ENCODE measurements at regions of chr11 and their contacts with region 1.

Region 1: DNA sequence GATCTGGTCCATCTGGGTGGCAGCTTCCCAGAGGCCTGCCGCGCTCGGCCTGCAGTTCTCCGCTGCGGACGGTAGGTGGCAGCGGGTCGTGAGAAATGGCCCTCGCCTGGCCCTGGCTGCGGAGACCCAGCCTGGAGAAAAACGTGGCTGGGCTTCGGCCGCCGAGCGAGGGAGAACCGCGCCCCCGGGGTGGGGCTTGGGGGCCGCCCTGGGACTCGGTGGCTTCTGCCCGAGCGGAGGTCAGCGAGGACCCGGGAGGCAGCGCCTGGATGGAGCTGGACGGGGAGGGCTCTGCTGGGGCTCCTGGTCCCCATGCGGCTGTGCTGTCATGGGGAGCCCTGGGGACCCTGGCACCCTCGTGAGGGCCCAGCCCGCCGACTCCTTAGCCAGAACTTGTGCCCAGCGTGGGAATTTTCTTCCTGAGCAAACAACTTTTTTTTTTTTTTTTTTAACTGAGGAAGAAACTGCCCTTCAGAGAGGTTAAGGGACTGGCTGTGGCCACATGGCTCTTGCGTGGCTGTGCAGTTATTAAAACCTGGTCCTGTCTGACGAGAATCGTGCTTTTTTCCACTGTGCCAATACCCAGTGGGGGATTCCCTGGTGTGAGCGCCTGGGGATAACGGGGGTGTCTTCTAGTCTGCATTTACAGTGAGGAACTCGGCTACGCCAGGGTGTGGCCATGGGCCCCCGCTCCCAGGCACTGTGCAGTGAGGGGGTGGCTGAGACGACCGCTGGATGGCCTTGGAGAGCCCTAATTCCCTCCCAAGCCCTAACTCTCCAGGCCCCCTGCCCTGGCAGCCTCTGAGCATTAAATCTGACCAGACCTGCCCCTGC is 535.6 kb downstream of the INSC start:
- DNase-seq: peak; percentile 84
- ATAC-seq: peak; percentile 100
- H3K4me3 ChIP-seq: peak overlapping the region in 1 of 3 experiments; percentile 39; a peak in 1 of 6 replicates
- H3K27ac ChIP-seq: no peak overlapping the region
- H3K4me1 ChIP-seq: peaks cover 7% of the 10 kb centered on the region
- H3K27me3 ChIP-seq: peaks cover 0 to 7% of the 10 kb centered on the region in 2 experiments; a peak in 3 of 5 replicates
- CTCF ChIP-seq: peak; percentile 99
- EP300 ChIP-seq: peak; percentile 62 to 85
- POLR2A ChIP-seq: no peak
- RAD21 ChIP-seq: peak; percentile 94

Region 2: DNA sequence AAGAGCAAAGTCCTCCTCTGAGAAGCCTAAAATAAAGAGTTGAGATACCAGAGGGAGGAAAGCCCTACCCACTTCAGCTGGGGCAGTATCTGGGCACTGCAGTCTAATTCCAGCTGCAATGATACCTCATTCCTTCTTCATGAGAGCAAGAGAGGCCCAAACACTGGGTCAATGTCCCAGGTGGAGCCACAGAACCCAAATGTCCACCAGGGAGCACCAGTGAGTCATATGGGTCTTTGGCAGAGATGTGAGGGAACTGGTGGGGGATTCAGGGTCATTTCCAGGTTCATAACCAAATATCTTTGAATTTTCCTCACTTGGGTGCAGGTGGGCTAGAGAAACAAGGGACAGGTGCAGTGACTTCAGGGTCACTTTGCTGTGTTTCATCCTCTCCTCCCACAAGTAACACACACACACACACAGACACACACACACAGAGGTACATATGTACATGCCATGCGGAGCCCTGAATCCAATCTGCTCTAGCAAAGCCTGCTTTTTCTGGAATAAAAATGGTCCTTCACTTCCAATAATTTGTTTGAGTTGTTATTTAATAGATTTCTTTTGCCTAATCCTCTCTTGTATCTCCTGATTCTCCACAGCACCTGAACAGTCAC is 120.6 kb after region 1 on chr11:
- CTCF ChIA-PET with region 1: no interaction called
- POLR2A ChIA-PET with region 1: no interaction called
- in situ Hi-C with region 1: no loop called
- intact Hi-C with region 1: loop called (anchors 2 kb)
- DNase-seq: peak; percentile 25
- ATAC-seq: peak; percentile 81
- H3K4me3 ChIP-seq: no peak overlapping the region
- H3K27ac ChIP-seq: no peak overlapping the region
- H3K4me1 ChIP-seq: no peaks in the 10 kb centered on the region
- H3K27me3 ChIP-seq: no peaks in the 10 kb centered on the region
- CTCF ChIP-seq: peak; percentile 54
- EP300 ChIP-seq: no peak
- POLR2A ChIP-seq: no peak
- RAD21 ChIP-seq: no peak

Measured in HepG2 (cell line).